ENCODE measurements at regions of chr14 and their contacts with region 1.

Region 1: DNA sequence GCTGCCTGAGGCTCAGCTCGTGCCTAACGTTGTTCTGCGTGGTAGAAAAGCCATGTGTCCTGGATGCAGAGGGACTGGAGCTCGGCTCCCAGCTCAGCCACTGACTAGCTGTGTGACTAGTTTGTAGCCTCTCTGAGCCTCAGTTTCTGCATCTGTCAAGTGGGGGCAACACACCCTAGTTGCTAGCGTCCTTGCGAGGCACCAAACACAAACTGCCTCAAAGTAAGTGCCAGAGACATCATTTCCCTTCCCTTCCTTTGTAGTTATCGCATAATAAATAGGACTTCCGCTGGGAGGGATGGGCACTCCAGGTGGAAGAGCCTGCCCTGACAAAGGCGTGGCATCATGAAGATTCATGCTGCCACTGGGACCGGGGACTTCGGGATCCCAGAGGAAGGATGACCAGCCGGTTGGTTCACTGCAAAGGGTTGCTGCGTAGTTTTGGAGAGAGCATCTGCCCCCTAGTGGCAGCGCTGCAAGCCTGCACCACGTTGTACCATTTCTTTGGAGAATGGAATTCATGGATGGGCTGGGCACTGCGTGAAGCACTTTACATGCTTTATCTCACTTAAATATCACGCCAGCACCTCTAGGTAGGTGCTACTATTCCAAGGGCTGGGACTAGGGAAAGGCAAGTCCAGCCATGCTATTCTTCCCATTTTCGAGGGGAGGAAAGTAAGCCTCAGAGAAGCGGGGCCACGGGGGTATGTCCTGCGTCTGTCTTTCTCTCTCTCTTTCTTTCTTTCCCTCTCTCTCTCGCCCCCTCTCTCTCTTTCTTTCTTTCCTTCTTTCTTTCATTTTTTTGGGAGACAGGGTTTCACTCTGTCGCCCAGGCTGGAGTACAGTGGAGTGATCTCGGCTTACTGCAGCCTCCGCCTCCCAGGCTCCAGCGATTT is 4.6 kb downstream of the CCDC197 start:
- DNase-seq: peak; percentile 46 to 56
- ATAC-seq: peak; percentile 82

Region 2: GRCh38 chr14:93892923-93893558 is 108.7 kb before region 1 on chr14:
- intact Hi-C with region 1: no loop called
- DNase-seq: peak; percentile 39 to 79
- ATAC-seq: peak; percentile 60

Region 3: GRCh38 chr14:93939304-93940229 is 62.2 kb before region 1 on chr14:
- intact Hi-C with region 1: loop called (anchors 5 to 10 kb)
- DNase-seq: peak; percentile 69 to 86
- ATAC-seq: peak; percentile 92

Region 4: DNA sequence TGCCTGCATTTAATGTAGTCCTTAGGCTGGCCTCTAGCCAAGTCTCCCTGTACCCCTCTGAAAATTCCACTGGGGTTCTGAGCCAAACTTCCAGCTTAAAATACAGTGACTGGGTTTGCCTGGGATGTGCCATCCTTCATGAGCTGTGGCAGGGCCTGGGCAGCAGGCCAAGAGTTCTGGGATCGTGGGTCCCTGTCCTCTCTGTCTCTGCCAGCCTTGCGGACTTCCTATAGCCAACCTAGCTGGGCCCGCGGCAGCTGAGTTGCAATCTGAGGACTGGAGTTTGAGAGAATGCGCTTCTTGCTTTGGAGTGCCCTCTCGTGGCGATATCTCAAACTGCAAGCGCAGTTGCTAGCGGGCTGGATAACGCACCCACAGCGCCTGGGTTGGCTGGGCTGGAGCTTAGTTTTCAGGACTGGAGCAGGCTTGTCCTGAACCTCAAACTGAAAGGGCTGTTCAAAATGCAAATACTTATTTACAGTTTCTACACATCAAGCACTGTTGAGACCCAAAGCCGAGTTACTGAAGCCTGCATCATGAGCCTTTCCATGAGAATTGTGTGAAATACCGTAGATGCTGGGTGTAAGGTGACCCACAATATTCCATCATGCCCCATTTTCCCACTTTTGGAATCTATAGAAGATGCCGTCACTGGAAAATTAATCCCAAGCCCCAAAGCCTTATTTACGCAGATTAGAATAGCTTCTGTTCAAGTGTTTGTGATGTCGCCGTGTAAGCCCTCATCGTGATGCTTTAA is 135.0 kb after region 1 on chr14:
- intact Hi-C with region 1: no loop called
- DNase-seq: peak; percentile 77 to 94
- ATAC-seq: peak; percentile 97

Measured in left colon (tissue), 2 donors.